Uterus (tissue), 4 donors: ENCODE measurements at regions of chr10 and their contacts with region 1.

Region 1: GRCh38 chr10:3785257-3785850 is 345 bp upstream of the KLF6 start:
- DNase-seq: peak; percentile 99 to 100
- H3K4me3 ChIP-seq: peak overlapping the region; percentile 86 to 93
- H3K27ac ChIP-seq: peak overlapping the region; percentile 100
- H3K4me1 ChIP-seq: no peaks in the 10 kb centered on the region
- H3K27me3 ChIP-seq: no peaks in the 10 kb centered on the region
- CTCF ChIP-seq: peak in 1 of 4 experiments; percentile 51
- POLR2A ChIP-seq: peak; percentile 99 to 100

Region 2: GRCh38 chr10:3892440-3893425 is 107.4 kb after region 1 on chr10:
- intact Hi-C with region 1: no loop called
- DNase-seq: no peak
- H3K4me3 ChIP-seq: no peak overlapping the region
- H3K27ac ChIP-seq: no peak overlapping the region
- H3K4me1 ChIP-seq: peaks cover 0 to 2% of the 10 kb centered on the region in 2 donors
- H3K27me3 ChIP-seq: no peaks in the 10 kb centered on the region
- CTCF ChIP-seq: no peak
- POLR2A ChIP-seq: no peak

Region 3: DNA sequence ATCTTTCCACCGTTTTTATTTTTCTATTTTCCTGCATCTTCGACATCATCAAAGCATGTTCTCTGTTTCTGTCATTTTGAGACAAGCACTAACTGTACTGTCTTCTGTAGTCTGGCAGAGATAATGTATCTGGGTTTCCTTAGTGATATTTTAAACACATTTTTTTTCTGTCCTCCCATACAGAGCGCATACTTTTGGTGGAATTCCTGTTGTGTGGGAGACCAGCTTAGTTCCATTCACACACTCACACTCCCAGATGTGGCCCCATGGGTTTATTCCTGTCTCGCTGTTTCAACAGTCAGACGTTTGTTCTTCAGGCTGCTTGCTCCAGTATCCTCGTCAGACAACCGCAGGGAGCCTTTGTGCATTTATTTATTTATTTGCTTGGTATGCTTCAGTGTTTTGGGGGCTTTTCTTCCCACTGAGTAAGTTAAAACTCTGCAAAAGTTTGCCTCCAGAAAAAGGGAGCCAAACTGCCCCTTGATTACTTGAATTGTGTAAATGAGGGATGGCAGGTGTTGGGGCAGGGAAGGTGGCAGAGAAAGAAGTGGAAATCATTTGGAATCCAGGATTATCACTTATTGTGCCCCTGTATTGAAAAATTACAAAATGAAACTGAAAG is 456.5 kb after region 1 on chr10:
- intact Hi-C with region 1: loop called (anchors 10 kb)
- DNase-seq: peak; percentile 54 to 56
- H3K4me3 ChIP-seq: peak overlapping the region; percentile 11 to 31
- H3K27ac ChIP-seq: peak overlapping the region; percentile 85 to 95
- H3K4me1 ChIP-seq: no peaks in the 10 kb centered on the region
- H3K27me3 ChIP-seq: no peaks in the 10 kb centered on the region
- CTCF ChIP-seq: no peak
- POLR2A ChIP-seq: peak in 1 of 2 donors; percentile 20